Caco-2 (cell line): ENCODE measurements at regions of chr4 and their contacts with region 1.

Region 1: DNA sequence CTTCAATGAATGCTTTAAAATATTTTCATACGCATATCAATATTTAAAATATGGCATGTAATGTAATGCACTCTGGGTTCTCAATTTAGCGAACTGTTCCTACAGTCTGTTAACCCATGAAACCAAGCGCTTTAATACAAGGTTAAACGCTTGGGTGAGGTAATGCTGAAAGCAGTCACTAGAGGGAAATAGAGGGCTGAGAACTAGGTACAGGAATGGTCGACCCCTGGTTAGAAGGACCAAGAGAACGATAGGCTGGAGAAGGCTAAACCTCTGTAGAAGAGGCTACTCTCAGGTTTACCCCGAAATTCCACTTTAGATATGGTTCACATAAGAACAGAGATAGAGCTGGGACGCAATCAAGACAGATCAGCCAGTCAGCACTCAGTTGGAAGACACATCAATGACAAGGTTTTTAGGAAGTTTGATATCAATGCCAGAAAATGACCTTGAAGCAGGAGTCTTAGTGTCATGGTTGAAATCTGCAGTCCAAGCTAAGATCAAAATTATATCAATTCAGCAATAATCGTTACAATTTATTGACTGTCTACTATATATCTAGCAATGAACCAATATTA is 26.9 kb downstream of the ARSJ start:
- DNase-seq: peak; percentile 38 to 66
- H3K4me3 ChIP-seq: no peak overlapping the region
- H3K4me3 Mint-ChIP-seq: no peak overlapping the region
- H3K27ac Mint-ChIP-seq: no peak overlapping the region
- H3K4me1 ChIP-seq: peaks cover 2% of the 10 kb centered on the region
- H3K4me1 Mint-ChIP-seq: peaks cover 8% of the 10 kb centered on the region
- H3K27me3 ChIP-seq: no peaks in the 10 kb centered on the region
- H3K27me3 Mint-ChIP-seq: no peaks in the 10 kb centered on the region
- CTCF ChIP-seq: peak; percentile 65 to 88

Region 2: GRCh38 chr4:113607998-113608397 is 344.5 kb before region 1 on chr4:
- CTCF ChIA-PET with region 1: no interaction called
- POLR2A ChIA-PET with region 1: no interaction called
- intact Hi-C with region 1: no loop called
- DNase-seq: no peak
- H3K4me3 ChIP-seq: no peak overlapping the region
- H3K4me3 Mint-ChIP-seq: no peak overlapping the region
- H3K27ac Mint-ChIP-seq: no peak overlapping the region
- H3K4me1 ChIP-seq: peaks cover 5% of the 10 kb centered on the region; the same call in 1 of the 2 replicates
- H3K4me1 Mint-ChIP-seq: no peaks in the 10 kb centered on the region
- H3K27me3 ChIP-seq: no peaks in the 10 kb centered on the region
- H3K27me3 Mint-ChIP-seq: no peaks in the 10 kb centered on the region
- CTCF ChIP-seq: no peak

Region 3: DNA sequence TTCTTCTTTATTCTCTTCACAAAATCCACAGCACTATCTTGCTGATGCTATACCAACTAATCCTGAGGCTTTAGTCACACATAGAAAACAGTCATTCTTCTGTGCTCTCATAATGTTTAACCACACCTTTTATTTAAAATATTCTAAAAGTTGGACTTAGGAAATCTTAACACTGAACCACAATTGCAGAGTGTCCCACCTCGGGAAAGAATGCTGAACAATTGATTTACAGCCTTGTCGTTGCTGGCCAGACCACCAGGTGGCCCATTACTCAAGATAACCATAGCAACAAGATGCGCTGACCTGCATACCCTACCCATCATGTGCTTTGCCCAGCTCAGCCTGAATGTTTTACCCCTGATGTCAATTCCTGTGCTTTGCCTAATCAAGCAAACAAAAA is 73.9 kb before region 1 on chr4:
- CTCF ChIA-PET with region 1: no interaction called
- POLR2A ChIA-PET with region 1: no interaction called
- intact Hi-C with region 1: loop called (anchors 2 kb)
- DNase-seq: peak; percentile 74 to 75
- H3K4me3 ChIP-seq: no peak overlapping the region
- H3K4me3 Mint-ChIP-seq: no peak overlapping the region
- H3K27ac Mint-ChIP-seq: no peak overlapping the region
- H3K4me1 ChIP-seq: no peaks in the 10 kb centered on the region
- H3K4me1 Mint-ChIP-seq: peaks cover 9% of the 10 kb centered on the region
- H3K27me3 ChIP-seq: no peaks in the 10 kb centered on the region
- H3K27me3 Mint-ChIP-seq: no peaks in the 10 kb centered on the region
- CTCF ChIP-seq: peak; percentile 60 to 76

Region 4: DNA sequence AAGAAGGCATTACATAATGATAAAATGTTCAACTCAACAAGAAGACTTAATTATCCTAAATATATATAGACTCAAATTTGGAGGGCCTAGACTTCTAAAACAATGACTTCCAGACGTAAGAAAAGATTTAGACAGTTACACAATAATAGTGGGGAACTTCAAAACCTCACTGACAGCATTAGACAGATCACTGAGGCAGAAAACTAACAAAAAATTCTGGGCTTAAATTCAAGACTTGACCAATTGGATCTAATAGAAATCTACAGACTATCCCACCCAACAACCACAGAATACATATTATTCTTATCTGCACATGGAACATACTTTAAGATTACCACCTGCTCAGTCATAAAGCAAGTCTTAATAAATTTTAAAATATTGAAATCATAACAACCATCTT is 120.2 kb after region 1 on chr4:
- CTCF ChIA-PET with region 1: no interaction called
- POLR2A ChIA-PET with region 1: no interaction called
- intact Hi-C with region 1: loop called (anchors 1 kb)
- DNase-seq: no peak
- H3K4me3 ChIP-seq: no peak overlapping the region
- H3K4me3 Mint-ChIP-seq: no peak overlapping the region
- H3K27ac Mint-ChIP-seq: no peak overlapping the region
- H3K4me1 ChIP-seq: no peaks in the 10 kb centered on the region
- H3K4me1 Mint-ChIP-seq: no peaks in the 10 kb centered on the region
- H3K27me3 ChIP-seq: no peaks in the 10 kb centered on the region
- H3K27me3 Mint-ChIP-seq: no peaks in the 10 kb centered on the region
- CTCF ChIP-seq: no peak

Region 5: GRCh38 chr4:114272226-114272625 is 319.7 kb after region 1 on chr4:
- CTCF ChIA-PET with region 1: no interaction called
- POLR2A ChIA-PET with region 1: no interaction called
- intact Hi-C with region 1: loop called (anchors 10 kb)
- DNase-seq: no peak
- H3K4me3 ChIP-seq: no peak overlapping the region
- H3K4me3 Mint-ChIP-seq: no peak overlapping the region
- H3K27ac Mint-ChIP-seq: no peak overlapping the region
- H3K4me1 ChIP-seq: peaks cover 48% of the 10 kb centered on the region
- H3K4me1 Mint-ChIP-seq: peaks cover 25% of the 10 kb centered on the region
- H3K27me3 ChIP-seq: no peaks in the 10 kb centered on the region
- H3K27me3 Mint-ChIP-seq: no peaks in the 10 kb centered on the region
- CTCF ChIP-seq: no peak

Region 6: GRCh38 chr4:114378306-114378903 is 425.9 kb after region 1 on chr4:
- CTCF ChIA-PET with region 1: interaction called, 4 read pairs
- POLR2A ChIA-PET with region 1: no interaction called
- intact Hi-C with region 1: loop called (anchors 1 kb)
- DNase-seq: peak in 1 of 2 experiments; percentile 27
- H3K4me3 ChIP-seq: no peak overlapping the region
- H3K4me3 Mint-ChIP-seq: no peak overlapping the region
- H3K27ac Mint-ChIP-seq: no peak overlapping the region
- H3K4me1 ChIP-seq: no peaks in the 10 kb centered on the region
- H3K4me1 Mint-ChIP-seq: no peaks in the 10 kb centered on the region
- H3K27me3 ChIP-seq: no peaks in the 10 kb centered on the region
- H3K27me3 Mint-ChIP-seq: no peaks in the 10 kb centered on the region
- CTCF ChIP-seq: peak in 1 of 2 experiments; percentile 48